ENCODE measurements at regions of chr19 and their contacts with region 1.

Region 1: GRCh38 chr19:55670280-55671053 is 4.6 kb upstream of the EPN1 start:
- DNase-seq: no peak
- ATAC-seq: no peak
- H3K4me3 ChIP-seq: no peak overlapping the region
- H3K27ac ChIP-seq: no peak overlapping the region
- H3K4me1 ChIP-seq: peaks cover 5% of the 10 kb centered on the region; the same call in 1 of the 2 replicates
- H3K27me3 ChIP-seq: no peaks in the 10 kb centered on the region
- CTCF ChIP-seq: no peak

Region 2: GRCh38 chr19:55653758-55654539 is 16.5 kb before region 1 on chr19:
- CTCF ChIA-PET with region 1: interaction called, 7 read pairs
- POLR2A ChIA-PET with region 1: no interaction called
- intact Hi-C with region 1: loop called (anchors 2 kb)
- DNase-seq: peak; percentile 100
- ATAC-seq: peak; percentile 79
- H3K4me3 ChIP-seq: peak overlapping the region; percentile 78
- H3K27ac ChIP-seq: peak overlapping the region; percentile 80
- H3K4me1 ChIP-seq: peaks cover 12% of the 10 kb centered on the region
- H3K27me3 ChIP-seq: no peaks in the 10 kb centered on the region
- CTCF ChIP-seq: peak; percentile 99

Region 3: GRCh38 chr19:55777528-55777927 is 107.1 kb after region 1 on chr19:
- CTCF ChIA-PET with region 1: no interaction called
- POLR2A ChIA-PET with region 1: interaction called, 10 read pairs
- intact Hi-C with region 1: no loop called
- DNase-seq: peak; percentile 30
- ATAC-seq: no peak
- H3K4me3 ChIP-seq: no peak overlapping the region
- H3K27ac ChIP-seq: no peak overlapping the region
- H3K4me1 ChIP-seq: no peaks in the 10 kb centered on the region
- H3K27me3 ChIP-seq: peaks cover 79% of the 10 kb centered on the region
- CTCF ChIP-seq: peak; percentile 66